CD4-positive, alpha-beta memory T cell (primary cell): ENCODE measurements at regions of chr22 and their contacts with region 1.

Region 1: GRCh38 chr22:50498322-50498890 is 9.1 kb downstream of the LMF2 start:
- DNase-seq: peak; percentile 66 to 69 (median 68)
- H3K4me3 ChIP-seq: no peak overlapping the region
- H3K4me3 Mint-ChIP-seq: no peak overlapping the region
- H3K27ac ChIP-seq: no peak overlapping the region
- H3K27ac Mint-ChIP-seq: peak overlapping the region in 1 of 7 donors; percentile 30
- H3K4me1 ChIP-seq: peaks cover 3% of the 10 kb centered on the region
- H3K4me1 Mint-ChIP-seq: peaks cover 0 to 5% (median under 1%) of the 10 kb centered on the region in 4 donors
- H3K27me3 ChIP-seq: no peaks in the 10 kb centered on the region
- H3K27me3 Mint-ChIP-seq: no peaks in the 10 kb centered on the region

Region 2: GRCh38 chr22:50244420-50245213 is 253.8 kb before region 1 on chr22 and contains the start of gene TUBGCP6:
- CTCF ChIA-PET with region 1: interaction called, 5 read pairs
- POLR2A ChIA-PET with region 1: interaction called, 3 read pairs
- intact Hi-C with region 1: loop called (anchors 1 kb)
- DNase-seq: peak; percentile 89 to 93 (median 91)
- H3K4me3 ChIP-seq: peak within 1 kb of the TSS; percentile 37 to 99
- H3K4me3 Mint-ChIP-seq: peak within 1 kb of the TSS; percentile 95 to 100 (median 98)
- H3K27ac ChIP-seq: peak within 1 kb of the TSS; percentile 98
- H3K27ac Mint-ChIP-seq: peak within 1 kb of the TSS; percentile 90 to 100 (median 99)
- H3K4me1 ChIP-seq: peaks cover 69% of the 10 kb centered on the region
- H3K4me1 Mint-ChIP-seq: peaks cover 23 to 64% (median 37%) of the 10 kb centered on the region in 4 donors
- H3K27me3 ChIP-seq: no peaks in the 10 kb centered on the region
- H3K27me3 Mint-ChIP-seq: no peaks in the 10 kb centered on the region
- total RNA-seq, gene TUBGCP6: 132 to 133 TPM

Region 3: DNA sequence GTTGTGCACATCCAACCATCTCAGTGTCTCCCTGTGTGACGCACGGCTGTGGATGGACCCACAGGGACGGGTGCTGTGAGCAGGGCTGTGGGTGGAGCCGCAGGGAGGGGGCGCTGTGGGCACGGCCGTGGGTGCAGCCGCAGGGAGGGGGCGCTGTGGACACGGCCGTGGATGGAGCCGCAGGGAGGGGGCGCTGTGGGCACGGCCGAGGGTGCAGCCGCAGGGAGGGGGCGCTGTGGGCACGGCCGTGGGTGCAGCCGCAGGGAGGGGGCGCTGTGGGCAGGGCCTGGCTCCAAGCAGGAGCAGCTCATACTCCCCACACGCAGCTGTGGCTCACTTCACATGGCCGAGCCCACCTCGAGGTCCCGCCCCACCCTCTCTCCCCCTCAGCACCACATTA is 222.3 kb before region 1 on chr22:
- CTCF ChIA-PET with region 1: interaction called, 3 read pairs
- POLR2A ChIA-PET with region 1: no interaction called
- intact Hi-C with region 1: loop called (anchors 5 kb)
- DNase-seq: peak in 3 of 5 donors; percentile 24 to 58 (median 52)
- H3K4me3 ChIP-seq: no peak overlapping the region
- H3K4me3 Mint-ChIP-seq: no peak overlapping the region
- H3K27ac ChIP-seq: no peak overlapping the region
- H3K27ac Mint-ChIP-seq: peak overlapping the region in 1 of 7 donors; percentile 66
- H3K4me1 ChIP-seq: peaks cover 6% of the 10 kb centered on the region
- H3K4me1 Mint-ChIP-seq: peaks cover 0 to 8% (median 3%) of the 10 kb centered on the region in 4 donors
- H3K27me3 ChIP-seq: no peaks in the 10 kb centered on the region
- H3K27me3 Mint-ChIP-seq: no peaks in the 10 kb centered on the region

Region 4: DNA sequence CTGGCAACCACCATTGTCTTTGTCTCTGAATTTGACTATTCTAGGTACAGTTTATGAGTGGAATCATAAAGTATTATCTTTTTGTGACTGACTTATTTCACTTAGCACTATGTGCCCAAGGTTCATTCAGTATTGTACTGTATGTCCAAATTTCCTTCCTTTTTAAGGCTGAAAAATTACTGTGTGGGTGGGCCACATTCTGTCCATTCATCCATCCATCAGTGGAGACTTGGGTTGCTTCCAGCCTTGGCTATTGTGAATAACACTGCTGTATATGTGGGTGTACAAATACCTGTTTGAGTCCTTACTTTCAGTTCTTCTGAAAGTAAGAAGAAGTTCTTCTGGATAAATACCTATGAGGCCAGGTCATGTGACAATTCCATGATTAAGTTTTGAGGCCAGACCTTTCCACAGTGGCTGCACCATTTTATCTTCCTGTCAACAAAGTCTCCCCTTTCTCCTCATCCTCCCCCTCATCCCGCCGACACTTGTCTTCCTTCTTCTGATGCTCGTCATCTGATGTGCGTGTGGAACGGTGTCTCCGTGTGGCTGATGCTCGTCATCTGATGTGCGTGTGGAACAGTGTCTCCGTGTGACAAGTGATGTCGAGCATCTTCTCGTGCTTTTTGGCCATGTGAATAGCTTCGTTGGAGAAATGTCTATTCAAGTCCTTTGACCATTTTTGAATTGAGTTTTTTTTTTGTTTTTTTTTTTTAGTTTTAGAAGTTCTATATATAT is 73.1 kb before region 1 on chr22:
- CTCF ChIA-PET with region 1: interaction called, 11 read pairs
- POLR2A ChIA-PET with region 1: no interaction called
- intact Hi-C with region 1: no loop called
- DNase-seq: no peak
- H3K4me3 ChIP-seq: no peak overlapping the region
- H3K4me3 Mint-ChIP-seq: peak overlapping the region in 1 of 8 donors; percentile 39
- H3K27ac ChIP-seq: no peak overlapping the region
- H3K27ac Mint-ChIP-seq: peak overlapping the region in 1 of 7 donors; percentile 5
- H3K4me1 ChIP-seq: no peaks in the 10 kb centered on the region
- H3K4me1 Mint-ChIP-seq: peaks cover 0 to 5% (median 1%) of the 10 kb centered on the region in 4 donors
- H3K27me3 ChIP-seq: no peaks in the 10 kb centered on the region
- H3K27me3 Mint-ChIP-seq: no peaks in the 10 kb centered on the region

Region 5: DNA sequence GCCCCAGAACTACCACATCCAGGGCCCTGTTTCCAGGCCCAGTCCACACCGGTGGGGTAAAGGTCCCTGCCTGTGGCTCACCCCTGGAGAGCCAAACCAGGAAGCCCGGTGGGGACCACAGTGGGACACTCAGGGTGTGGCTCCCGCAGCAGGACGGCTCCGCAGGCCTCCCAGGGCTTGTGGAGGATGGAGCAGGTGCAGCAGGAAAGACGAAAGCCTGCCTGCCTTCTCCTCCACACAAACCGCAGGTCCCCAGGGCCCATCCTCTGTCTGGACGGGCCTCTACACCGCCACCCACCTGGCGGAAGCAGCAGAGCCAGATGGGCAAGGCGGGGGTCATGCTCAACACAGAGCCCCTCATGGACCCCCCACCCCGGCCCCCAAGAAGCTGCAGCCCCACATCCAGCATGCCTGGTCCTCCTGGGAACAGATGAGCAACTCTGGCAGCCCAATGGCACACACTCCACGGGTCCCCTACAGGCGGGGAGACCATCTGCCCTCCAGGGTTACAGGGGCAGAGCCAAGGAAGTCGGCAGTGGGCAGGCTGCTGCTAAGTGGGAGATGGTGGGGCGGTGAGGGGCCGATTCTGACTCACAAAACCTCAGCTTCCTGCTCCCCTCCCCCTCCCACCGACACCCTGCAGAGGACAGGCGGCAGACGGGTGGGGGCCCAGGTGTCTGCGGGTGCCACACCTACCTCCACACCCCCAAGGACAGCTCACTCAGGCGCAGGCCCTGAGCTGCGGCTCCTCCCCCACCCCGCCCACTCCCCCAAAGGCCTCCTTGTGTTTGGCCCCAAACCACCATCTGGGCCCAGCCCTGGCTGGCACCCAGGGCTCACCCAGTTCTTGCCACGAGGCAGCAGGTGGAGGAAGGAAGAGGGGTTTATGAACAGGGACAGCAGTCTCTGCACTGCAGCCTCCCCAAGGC is 28.8 kb before region 1 on chr22:
- CTCF ChIA-PET with region 1: interaction called, 16 read pairs
- POLR2A ChIA-PET with region 1: interaction called, 16 read pairs
- intact Hi-C with region 1: loop called (anchors 1 kb)
- DNase-seq: peak; percentile 96 to 99 (median 97)
- H3K4me3 ChIP-seq: peak overlapping the region; percentile 42 to 51
- H3K4me3 Mint-ChIP-seq: peak overlapping the region; percentile 74 to 88 (median 84)
- H3K27ac ChIP-seq: peak overlapping the region; percentile 75
- H3K27ac Mint-ChIP-seq: peak overlapping the region; percentile 89 to 98 (median 96)
- H3K4me1 ChIP-seq: peaks cover 58% of the 10 kb centered on the region
- H3K4me1 Mint-ChIP-seq: peaks cover 35 to 69% (median 51%) of the 10 kb centered on the region in 4 donors
- H3K27me3 ChIP-seq: no peaks in the 10 kb centered on the region
- H3K27me3 Mint-ChIP-seq: no peaks in the 10 kb centered on the region

Region 6: GRCh38 chr22:50670513-50670912 is 172.1 kb after region 1 on chr22:
- CTCF ChIA-PET with region 1: no interaction called
- POLR2A ChIA-PET with region 1: no interaction called
- intact Hi-C with region 1: no loop called
- DNase-seq: no peak
- H3K4me3 ChIP-seq: no peak overlapping the region
- H3K4me3 Mint-ChIP-seq: peak overlapping the region in 2 of 8 donors; percentile 16 to 31
- H3K27ac ChIP-seq: no peak overlapping the region
- H3K27ac Mint-ChIP-seq: no peak overlapping the region
- H3K4me1 ChIP-seq: peaks cover 17% of the 10 kb centered on the region
- H3K4me1 Mint-ChIP-seq: peaks cover 5 to 27% (median 11%) of the 10 kb centered on the region in 4 donors
- H3K27me3 ChIP-seq: peaks cover 26% of the 10 kb centered on the region
- H3K27me3 Mint-ChIP-seq: peaks cover 23 to 40% of the 10 kb centered on the region in 2 donors